MCF 10A (cell line): ENCODE measurements at regions of chr13 and their contacts with region 1.

Region 1: DNA sequence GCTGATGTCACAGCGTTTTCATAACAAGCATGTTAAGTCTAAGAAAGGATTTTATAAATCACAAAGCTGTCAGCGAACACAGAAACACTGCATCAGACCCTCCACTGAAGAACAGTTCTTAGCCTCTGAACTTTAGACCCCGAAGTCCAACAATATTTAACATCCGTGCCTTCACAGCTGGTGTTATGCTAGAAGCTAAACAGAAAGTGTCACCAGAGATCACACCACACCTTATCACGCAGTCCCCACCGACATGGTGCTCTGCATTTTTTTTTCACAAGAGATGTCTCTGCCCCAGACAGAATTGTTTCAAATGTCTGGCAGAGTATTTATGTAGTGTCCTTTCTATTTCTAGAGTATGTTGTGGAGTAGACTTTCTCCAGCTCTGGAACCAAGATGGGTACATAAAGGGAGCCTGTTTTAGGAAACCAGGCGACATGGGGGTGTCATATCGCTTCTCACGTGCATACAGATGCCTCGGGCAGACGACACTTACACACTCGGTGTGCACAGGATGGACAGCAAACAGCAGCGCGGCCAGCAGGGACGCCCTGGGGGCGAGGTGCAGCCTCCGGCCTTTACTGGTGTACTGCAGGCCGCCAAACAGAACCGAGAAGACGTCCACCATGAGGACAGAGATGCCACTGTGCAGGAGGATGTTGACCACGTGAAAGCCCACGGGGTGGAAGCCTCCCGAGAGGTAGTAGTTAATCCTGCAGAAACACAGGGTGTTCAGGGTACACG is 12.0 kb downstream of the TMTC4 start:
- DNase-seq: no peak
- H3K4me3 Mint-ChIP-seq: no peak overlapping the region
- H3K27ac Mint-ChIP-seq: no peak overlapping the region
- H3K4me1 Mint-ChIP-seq: no peaks in the 10 kb centered on the region
- H3K27me3 Mint-ChIP-seq: no peaks in the 10 kb centered on the region
- CTCF ChIP-seq: no peak

Region 2: DNA sequence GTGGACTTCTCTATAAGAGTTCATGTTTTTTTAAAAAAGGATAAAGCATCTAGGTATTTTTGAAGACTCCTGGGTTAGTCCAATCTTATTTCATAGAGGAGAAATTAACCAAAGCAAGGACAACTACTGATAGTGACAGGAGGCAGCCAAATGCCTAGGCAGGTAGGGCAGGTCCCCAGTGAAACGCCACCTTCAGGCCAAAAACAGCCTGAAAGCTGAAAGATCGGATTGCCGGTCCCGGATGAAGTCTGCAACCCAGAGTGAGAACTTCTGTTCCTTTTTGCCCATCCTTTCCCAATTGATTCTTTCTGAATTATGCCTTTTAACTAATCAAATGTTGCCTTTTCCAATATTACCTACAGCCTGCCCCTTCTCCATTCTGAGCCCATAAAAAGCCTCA is 67.9 kb before region 1 on chr13:
- CTCF ChIA-PET with region 1: no interaction called
- POLR2A ChIA-PET with region 1: no interaction called
- intact Hi-C with region 1: loop called (anchors 5 kb)
- DNase-seq: no peak
- H3K4me3 Mint-ChIP-seq: no peak overlapping the region
- H3K27ac Mint-ChIP-seq: no peak overlapping the region
- H3K4me1 Mint-ChIP-seq: no peaks in the 10 kb centered on the region
- H3K27me3 Mint-ChIP-seq: no peaks in the 10 kb centered on the region
- CTCF ChIP-seq: peak; percentile 13